Lower leg skin (tissue), 4 donors: ENCODE measurements at regions of chr18 and their contacts with region 1.

Region 1: DNA sequence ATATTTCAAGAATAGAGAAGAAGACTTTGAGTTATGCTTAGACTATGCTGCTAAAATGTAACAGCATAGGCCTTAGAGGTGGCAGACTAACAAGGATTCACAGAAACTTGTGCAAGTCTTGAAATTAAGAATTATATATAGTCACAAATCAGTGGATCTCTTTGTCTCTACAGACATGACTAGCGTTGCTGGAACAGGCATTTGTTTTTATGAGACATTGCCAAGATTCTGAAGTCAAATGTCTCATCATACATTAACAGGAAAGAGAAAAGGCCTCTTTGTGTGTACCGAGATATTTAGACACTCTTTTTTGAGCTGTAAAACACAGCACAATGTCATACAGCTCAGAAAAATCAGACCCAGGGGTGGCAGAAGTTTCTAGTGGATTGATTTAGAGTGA is 207.1 kb downstream of the TMX3 start:
- DNase-seq: no peak
- H3K4me3 ChIP-seq: no peak overlapping the region
- CTCF ChIP-seq: no peak
- POLR2A ChIP-seq: no peak

Region 2: DNA sequence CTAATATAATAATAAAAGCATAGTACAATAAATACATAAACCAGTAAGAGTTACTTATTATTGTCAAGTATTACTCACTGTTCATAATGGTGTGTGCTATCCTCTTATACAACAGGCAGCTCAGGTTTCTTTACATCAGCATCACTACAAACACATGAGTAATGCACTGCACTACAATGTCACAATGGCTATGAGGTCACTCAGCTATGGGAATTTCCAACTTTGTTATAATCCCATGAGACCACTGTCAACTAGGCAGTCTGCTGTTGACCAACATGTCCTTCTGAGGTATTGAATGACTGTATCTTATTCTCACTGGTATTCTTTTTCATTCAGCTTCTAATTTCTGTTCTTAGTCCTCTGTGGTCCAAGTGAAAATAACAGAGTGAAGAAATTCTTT is 740.9 kb before region 1 on chr18:
- intact Hi-C with region 1: loop called (anchors 5 kb)
- DNase-seq: no peak
- H3K4me3 ChIP-seq: no peak overlapping the region
- CTCF ChIP-seq: no peak
- POLR2A ChIP-seq: peak in 1 of 2 donors; percentile 19